ENCODE measurements at regions of chr20 and their contacts with region 1.

Region 1: DNA sequence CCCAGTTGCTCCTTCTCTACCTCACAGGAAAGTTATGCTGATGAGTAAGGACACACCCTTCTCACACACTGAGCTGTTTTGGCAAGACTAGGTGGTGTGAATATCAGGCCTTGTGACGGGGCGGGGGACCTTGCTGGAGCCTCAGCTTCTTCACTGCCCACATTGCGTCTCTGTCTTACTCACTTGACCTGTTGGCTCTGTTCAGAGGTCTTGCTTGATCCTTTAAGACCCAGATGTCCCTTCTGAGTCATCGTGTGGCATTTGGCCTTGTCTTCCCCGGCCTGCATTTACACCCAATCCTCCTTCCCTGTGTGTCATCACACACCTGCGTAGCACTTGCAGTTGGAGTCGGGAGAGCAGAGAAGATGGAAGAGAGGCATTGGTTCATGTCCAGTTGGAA is 8.3 kb upstream of the PRND start:
- DNase-seq: peak; percentile 80
- H3K4me3 Mint-ChIP-seq: peak overlapping the region; percentile 11
- H3K27ac Mint-ChIP-seq: peak overlapping the region; percentile 81
- H3K4me1 Mint-ChIP-seq: peaks cover 9% of the 10 kb centered on the region
- H3K27me3 Mint-ChIP-seq: no peaks in the 10 kb centered on the region
- CTCF ChIP-seq: no peak

Region 2: GRCh38 chr20:4607287-4607713 is 106.1 kb before region 1 on chr20:
- CTCF ChIA-PET with region 1: interaction called, 234 read pairs
- POLR2A ChIA-PET with region 1: interaction called, 9 read pairs
- intact Hi-C with region 1: no loop called
- DNase-seq: peak; percentile 71
- H3K4me3 Mint-ChIP-seq: no peak overlapping the region
- H3K27ac Mint-ChIP-seq: no peak overlapping the region
- H3K4me1 Mint-ChIP-seq: peaks cover 2% of the 10 kb centered on the region
- H3K27me3 Mint-ChIP-seq: no peaks in the 10 kb centered on the region
- CTCF ChIP-seq: peak; percentile 78

Region 3: GRCh38 chr20:4666001-4666479 is 47.4 kb before region 1 on chr20:
- CTCF ChIA-PET with region 1: interaction called, 3 read pairs
- POLR2A ChIA-PET with region 1: interaction called, 8 read pairs
- intact Hi-C with region 1: loop called (anchors 5 kb)
- DNase-seq: peak; percentile 80
- H3K4me3 Mint-ChIP-seq: peak overlapping the region; percentile 62
- H3K27ac Mint-ChIP-seq: peak overlapping the region; percentile 72
- H3K4me1 Mint-ChIP-seq: peaks cover 32% of the 10 kb centered on the region
- H3K27me3 Mint-ChIP-seq: no peaks in the 10 kb centered on the region
- CTCF ChIP-seq: no peak

Region 4: GRCh38 chr20:4905613-4906012 is 192.2 kb after region 1 on chr20:
- CTCF ChIA-PET with region 1: no interaction called
- POLR2A ChIA-PET with region 1: no interaction called
- intact Hi-C with region 1: no loop called
- DNase-seq: no peak
- H3K4me3 Mint-ChIP-seq: no peak overlapping the region
- H3K27ac Mint-ChIP-seq: no peak overlapping the region
- H3K4me1 Mint-ChIP-seq: peaks cover 6% of the 10 kb centered on the region
- H3K27me3 Mint-ChIP-seq: no peaks in the 10 kb centered on the region
- CTCF ChIP-seq: no peak

Measured in MCF 10A (cell line).